CD4-positive, alpha-beta T cell (primary cell): ENCODE measurements at regions of chr17 and their contacts with region 1.

Region 1: DNA sequence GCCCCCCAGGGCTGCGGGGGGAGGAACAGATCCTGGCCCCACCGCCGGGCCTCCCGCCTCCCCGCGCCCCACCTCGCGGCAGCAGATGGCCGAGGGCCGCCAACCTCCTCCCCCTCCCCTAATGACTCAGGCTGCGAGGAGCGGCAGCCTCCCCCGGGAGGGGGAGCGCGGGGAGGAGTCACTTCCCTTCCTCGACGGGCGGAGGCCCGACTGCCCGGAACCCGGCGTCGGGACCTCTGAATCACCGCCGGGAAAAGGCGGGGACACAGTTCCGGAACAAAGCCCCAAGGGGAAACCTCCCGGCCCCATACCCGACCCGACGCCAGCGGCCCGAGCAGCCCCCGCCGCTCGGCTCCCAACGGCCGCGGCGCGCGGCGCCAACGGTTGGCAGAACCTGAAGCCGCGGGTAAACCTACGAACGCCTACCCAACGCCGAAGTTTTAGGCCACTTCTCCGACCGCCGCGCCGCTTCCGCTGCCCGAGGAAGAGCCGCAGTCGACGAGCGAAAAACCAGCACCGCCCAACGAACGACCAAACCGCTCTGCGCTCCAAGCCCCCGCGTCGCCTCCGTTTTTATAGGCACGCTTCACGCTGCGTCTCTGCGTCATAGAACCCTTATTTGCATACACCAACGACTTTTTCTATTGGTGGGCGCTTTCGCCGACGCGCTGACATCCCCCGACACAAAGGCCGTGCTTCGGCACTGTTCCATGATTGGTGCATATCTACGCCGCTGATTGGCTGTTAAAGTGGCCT is 5.2 kb upstream of the UNK start:
- DNase-seq: peak; percentile 86 to 99 (median 95)
- ATAC-seq: peak; percentile 64
- H3K4me3 ChIP-seq: peak overlapping the region; percentile 79
- H3K4me3 Mint-ChIP-seq: peak overlapping the region; percentile 97
- H3K27ac ChIP-seq: peak overlapping the region; percentile 93 to 95
- H3K27ac Mint-ChIP-seq: peak overlapping the region; percentile 97
- H3K4me1 ChIP-seq: peaks cover 27% of the 10 kb centered on the region
- H3K4me1 Mint-ChIP-seq: peaks cover 60% of the 10 kb centered on the region
- H3K27me3 ChIP-seq: no peaks in the 10 kb centered on the region
- H3K27me3 Mint-ChIP-seq: peaks cover 5% of the 10 kb centered on the region
- CTCF ChIP-seq: no peak

Region 2: GRCh38 chr17:75764711-75765421 is 14.5 kb before region 1 on chr17 and contains the start of gene GALK1:
- CTCF ChIA-PET with region 1: interaction called, 17 read pairs
- POLR2A ChIA-PET with region 1: interaction called, 246 read pairs
- intact Hi-C with region 1: loop called (anchors 2 kb)
- DNase-seq: peak; percentile 58 to 89 (median 70)
- ATAC-seq: peak; percentile 95
- H3K4me3 ChIP-seq: peak within 1 kb of the TSS; percentile 65
- H3K4me3 Mint-ChIP-seq: peak within 1 kb of the TSS; percentile 74
- H3K27ac ChIP-seq: no peak within 1 kb of the TSS
- H3K27ac Mint-ChIP-seq: peak within 1 kb of the TSS; percentile 44
- H3K4me1 ChIP-seq: peaks cover 24% of the 10 kb centered on the region
- H3K4me1 Mint-ChIP-seq: peaks cover 16% of the 10 kb centered on the region
- H3K27me3 ChIP-seq: no peaks in the 10 kb centered on the region
- H3K27me3 Mint-ChIP-seq: no peaks in the 10 kb centered on the region
- CTCF ChIP-seq: peak; percentile 27
- total RNA-seq, gene GALK1: 5.9 to 6.0 TPM

Region 3: DNA sequence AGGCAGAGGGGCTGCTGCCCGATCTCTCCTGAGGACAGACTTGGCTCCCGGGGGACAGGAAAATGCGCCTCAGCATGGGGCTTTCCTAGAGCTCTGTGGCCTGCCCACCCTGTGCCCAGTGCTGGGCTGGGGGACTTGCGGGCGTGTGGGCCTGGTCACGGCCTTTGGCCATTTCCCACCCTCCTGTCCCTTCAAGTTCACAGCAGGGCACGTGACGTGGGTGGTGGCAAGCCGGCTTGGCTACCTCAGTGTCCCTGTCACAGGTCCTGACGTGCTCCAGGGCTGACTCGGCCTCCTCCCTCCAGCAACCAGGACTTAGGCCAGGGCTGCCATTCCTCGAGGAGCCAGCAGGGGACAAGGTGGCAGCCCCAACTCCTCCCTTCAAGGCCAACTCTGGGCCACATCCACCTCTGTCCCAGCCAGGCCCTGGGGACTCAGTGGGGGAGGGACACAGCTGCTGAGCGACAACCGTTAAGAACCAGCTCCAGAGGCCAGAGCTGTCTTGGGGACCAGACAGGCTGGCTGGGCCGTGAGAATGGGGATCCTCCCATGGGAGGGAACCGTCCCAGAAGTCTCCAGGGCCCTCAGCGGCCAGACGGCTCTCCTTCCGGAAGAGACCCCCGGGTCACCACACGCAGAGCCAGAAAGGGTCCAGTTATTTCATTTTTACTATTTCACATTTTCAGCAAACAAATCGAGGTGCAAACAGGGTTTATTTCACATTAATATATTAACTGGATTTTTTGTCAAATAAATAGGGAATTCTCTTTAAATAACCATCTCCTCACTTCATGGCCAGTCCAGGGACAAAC is 65.8 kb after region 1 on chr17:
- CTCF ChIA-PET with region 1: interaction called, 4 read pairs
- POLR2A ChIA-PET with region 1: interaction called, 41 read pairs
- intact Hi-C with region 1: loop called in 1 of 2 experiments (anchors 5 kb)
- DNase-seq: peak in 13 of 14 experiments; percentile 40 to 84 (median 55)
- ATAC-seq: peak; percentile 54
- H3K4me3 ChIP-seq: peak overlapping the region; percentile 81
- H3K4me3 Mint-ChIP-seq: peak overlapping the region; percentile 81
- H3K27ac ChIP-seq: peak overlapping the region; percentile 94 to 95
- H3K27ac Mint-ChIP-seq: peak overlapping the region; percentile 76
- H3K4me1 ChIP-seq: peaks cover 66% of the 10 kb centered on the region
- H3K4me1 Mint-ChIP-seq: peaks cover 26% of the 10 kb centered on the region
- H3K27me3 ChIP-seq: no peaks in the 10 kb centered on the region
- H3K27me3 Mint-ChIP-seq: no peaks in the 10 kb centered on the region
- CTCF ChIP-seq: peak; percentile 55

Region 4: GRCh38 chr17:75877752-75878173 is 98.4 kb after region 1 on chr17:
- CTCF ChIA-PET with region 1: no interaction called
- POLR2A ChIA-PET with region 1: interaction called, 26 read pairs
- intact Hi-C with region 1: no loop called
- DNase-seq: peak; percentile 52 to 90 (median 66)
- ATAC-seq: peak; percentile 72
- H3K4me3 ChIP-seq: peak overlapping the region; percentile 60
- H3K4me3 Mint-ChIP-seq: peak overlapping the region; percentile 91
- H3K27ac ChIP-seq: peak overlapping the region; percentile 15 to 66
- H3K27ac Mint-ChIP-seq: peak overlapping the region; percentile 91
- H3K4me1 ChIP-seq: peaks cover 64% of the 10 kb centered on the region
- H3K4me1 Mint-ChIP-seq: peaks cover 51% of the 10 kb centered on the region
- H3K27me3 ChIP-seq: no peaks in the 10 kb centered on the region
- H3K27me3 Mint-ChIP-seq: no peaks in the 10 kb centered on the region
- CTCF ChIP-seq: peak; percentile 70